ENCODE measurements at regions of chr1 and their contacts with region 1.

Region 1: GRCh38 chr1:152189657-152190442 is 30.8 kb upstream of the RPTN start:
- DNase-seq: peak; percentile 72
- ATAC-seq: peak; percentile 72 to 78

Region 2: DNA sequence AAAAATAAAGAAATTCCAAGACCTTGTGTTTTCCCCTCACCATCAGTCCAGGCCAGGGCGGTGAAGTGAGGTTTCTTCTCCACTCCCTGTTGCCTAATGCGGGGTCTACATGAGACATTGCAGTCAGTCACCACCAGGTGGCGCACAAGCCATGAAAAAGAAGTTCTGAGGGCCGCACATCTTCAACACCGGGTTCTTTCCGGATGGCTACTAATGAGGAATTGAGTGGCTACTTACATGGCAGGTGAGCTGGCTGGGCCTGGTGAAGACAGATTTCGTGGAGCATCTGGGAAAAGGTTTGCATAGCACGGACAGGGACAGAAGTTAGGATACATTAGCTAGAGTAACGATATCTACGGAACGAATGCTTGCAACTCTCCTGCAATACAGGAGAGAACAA is 137.2 kb before region 1 on chr1:
- intact Hi-C with region 1: loop called (anchors 1 to 5 kb)
- DNase-seq: peak; percentile 86
- ATAC-seq: peak in 1 of 2 donors; percentile 26

Region 3: DNA sequence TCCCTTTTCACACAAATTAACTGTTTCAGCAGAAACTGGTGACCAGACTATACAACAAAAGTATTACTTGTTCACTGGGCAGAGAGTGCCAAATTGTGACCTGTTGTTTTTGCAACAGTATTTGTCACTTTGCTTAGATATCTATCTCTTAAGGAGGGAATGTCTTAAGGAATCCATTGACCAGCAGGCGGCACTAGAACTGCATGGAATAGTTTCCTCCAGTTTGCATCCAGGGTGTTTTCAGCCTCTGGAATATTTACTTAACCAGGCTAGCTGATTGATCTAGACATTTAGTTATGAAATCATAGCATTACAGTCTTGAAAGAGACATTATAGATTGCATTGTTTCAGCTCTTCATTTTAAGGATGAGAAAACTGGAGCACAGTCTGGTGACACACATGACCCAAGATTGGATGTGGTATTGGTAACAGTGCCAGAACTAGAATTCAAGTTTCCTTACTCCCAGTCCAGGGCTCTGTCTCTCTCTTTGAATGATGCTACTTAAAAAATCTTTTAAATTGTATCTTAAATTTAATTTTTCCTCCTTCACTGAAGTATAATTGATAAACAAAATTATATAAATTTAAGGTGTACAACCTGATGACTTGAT is 47.8 kb before region 1 on chr1:
- intact Hi-C with region 1: loop called (anchors 1 to 5 kb)
- DNase-seq: peak; percentile 65
- ATAC-seq: peak in 1 of 2 donors; percentile 69

Region 4: GRCh38 chr1:152347116-152347728 is 157.4 kb after region 1 on chr1:
- intact Hi-C with region 1: loop called in 1 of 2 experiments (anchors 10 kb)
- DNase-seq: no peak
- ATAC-seq: peak in 1 of 2 donors; percentile 55

Region 5: GRCh38 chr1:152440635-152441471 is 251.0 kb after region 1 on chr1:
- intact Hi-C with region 1: loop called (anchors 2 to 5 kb)
- DNase-seq: peak; percentile 79
- ATAC-seq: peak; percentile 84 to 85

Region 6: GRCh38 chr1:152459596-152460528 is 270.0 kb after region 1 on chr1:
- intact Hi-C with region 1: loop called in 1 of 2 experiments (anchors 2 kb)
- DNase-seq: peak; percentile 80
- ATAC-seq: peak in 1 of 2 donors; percentile 79